IMR-90 (cell line): ENCODE measurements at regions of chr4 and their contacts with region 1.

Region 1: DNA sequence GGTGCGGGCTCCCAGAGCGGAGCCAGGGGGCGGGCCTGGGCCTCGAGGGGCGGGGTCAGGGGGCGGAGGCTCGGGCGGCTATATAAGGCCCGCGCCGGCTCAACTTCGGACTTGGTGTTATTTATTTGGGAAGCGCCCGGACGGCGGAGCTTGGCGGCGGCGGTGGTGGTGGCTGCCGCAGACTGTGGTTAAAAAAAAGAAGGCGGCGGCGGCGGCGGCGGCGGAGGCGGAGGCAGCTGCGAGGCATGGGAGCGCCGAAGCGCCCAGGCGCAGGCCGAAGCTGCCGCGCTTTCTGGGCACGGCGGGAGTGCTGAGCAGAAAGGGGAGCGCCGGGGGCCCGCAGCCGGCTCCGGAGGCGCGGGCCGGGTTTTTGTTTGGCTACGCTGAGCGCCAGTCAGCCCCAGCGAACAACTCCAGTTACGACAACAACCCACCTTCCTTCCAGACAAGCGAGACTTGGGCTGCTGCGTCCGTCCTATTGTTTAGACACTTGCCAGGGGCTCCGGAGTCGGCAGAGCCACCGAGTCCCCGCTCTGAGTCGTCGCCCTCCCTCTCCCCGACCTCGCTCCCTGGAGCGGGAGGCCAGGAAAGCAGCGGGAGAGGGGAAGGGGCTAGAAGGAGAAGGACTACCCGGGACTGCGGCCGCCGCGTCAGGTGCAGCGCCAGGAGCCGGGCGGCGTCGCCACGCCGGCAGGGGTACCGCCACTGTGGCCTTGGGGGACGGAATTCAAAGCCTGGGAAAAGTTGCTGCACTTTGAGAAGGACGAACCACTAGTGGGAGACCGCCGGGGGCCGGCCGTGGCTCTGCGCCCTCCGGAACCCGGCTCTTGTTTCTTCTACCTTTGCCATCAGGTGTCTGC is at the start of gene SLIT2:
- DNase-seq: peak; percentile 68
- ATAC-seq: peak; percentile 75
- H3K4me3 ChIP-seq: peak within 1 kb of the TSS; percentile 55
- H3K27ac ChIP-seq: no peak within 1 kb of the TSS; the same call in 1 of the 2 replicates
- H3K4me1 ChIP-seq: peaks cover 11% of the 10 kb centered on the region
- H3K27me3 ChIP-seq: peaks cover 22% of the 10 kb centered on the region
- CTCF ChIP-seq: no peak
- POLR2A ChIP-seq: peak; percentile 93
- RAD21 ChIP-seq: no peak
- total RNA-seq, gene SLIT2: 13.6 and 18.1 TPM in 2 replicates

Region 2: GRCh38 chr4:18689308-18690115 is 1562.5 kb before region 1 on chr4:
- CTCF ChIA-PET with region 1: no interaction called
- POLR2A ChIA-PET with region 1: no interaction called
- dilution Hi-C with region 1: no loop called
- in situ Hi-C with region 1: loop called (anchors 25 kb)
- intact Hi-C with region 1: loop called (anchors 1 kb)
- DNase-seq: peak; percentile 66
- ATAC-seq: peak; percentile 74; the same call in 1 of the 2 replicates
- H3K4me3 ChIP-seq: no peak overlapping the region
- H3K27ac ChIP-seq: no peak overlapping the region
- H3K4me1 ChIP-seq: no peaks in the 10 kb centered on the region
- H3K27me3 ChIP-seq: no peaks in the 10 kb centered on the region
- CTCF ChIP-seq: peak; percentile 82
- POLR2A ChIP-seq: no peak
- RAD21 ChIP-seq: peak; percentile 89

Region 3: GRCh38 chr4:19239565-19239964 is 1012.5 kb before region 1 on chr4:
- CTCF ChIA-PET with region 1: no interaction called
- POLR2A ChIA-PET with region 1: no interaction called
- dilution Hi-C with region 1: no loop called
- in situ Hi-C with region 1: loop called (anchors 10 kb)
- intact Hi-C with region 1: no loop called
- DNase-seq: peak; percentile 66
- ATAC-seq: peak; percentile 37
- H3K4me3 ChIP-seq: no peak overlapping the region
- H3K27ac ChIP-seq: no peak overlapping the region
- H3K4me1 ChIP-seq: no peaks in the 10 kb centered on the region
- H3K27me3 ChIP-seq: no peaks in the 10 kb centered on the region
- CTCF ChIP-seq: no peak
- POLR2A ChIP-seq: no peak
- RAD21 ChIP-seq: no peak

Region 4: DNA sequence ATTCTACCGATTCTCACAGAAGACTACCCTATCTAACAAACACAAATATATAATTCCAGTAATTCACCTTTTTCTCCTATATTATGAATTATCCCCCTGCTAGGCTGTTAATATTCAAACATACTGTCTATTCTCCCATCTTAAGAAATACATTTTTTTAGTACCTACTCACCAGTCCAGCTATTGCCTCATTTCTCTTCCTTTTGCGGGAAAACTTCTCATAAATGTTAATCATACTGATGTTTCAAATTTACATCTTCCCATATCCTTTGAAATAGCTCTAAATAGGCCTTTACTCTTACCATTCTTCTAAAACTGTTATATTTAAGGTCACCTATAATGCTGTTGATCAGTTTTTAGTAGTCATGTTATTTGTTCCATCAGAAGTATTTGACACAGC is 759.4 kb before region 1 on chr4:
- CTCF ChIA-PET with region 1: no interaction called
- POLR2A ChIA-PET with region 1: no interaction called
- dilution Hi-C with region 1: no loop called
- in situ Hi-C with region 1: no loop called
- intact Hi-C with region 1: loop called (anchors 10 kb)
- DNase-seq: peak; percentile 56
- ATAC-seq: no peak
- H3K4me3 ChIP-seq: no peak overlapping the region
- H3K27ac ChIP-seq: no peak overlapping the region
- H3K4me1 ChIP-seq: peaks cover 8% of the 10 kb centered on the region
- H3K27me3 ChIP-seq: no peaks in the 10 kb centered on the region
- CTCF ChIP-seq: no peak
- POLR2A ChIP-seq: no peak
- RAD21 ChIP-seq: no peak

Region 5: DNA sequence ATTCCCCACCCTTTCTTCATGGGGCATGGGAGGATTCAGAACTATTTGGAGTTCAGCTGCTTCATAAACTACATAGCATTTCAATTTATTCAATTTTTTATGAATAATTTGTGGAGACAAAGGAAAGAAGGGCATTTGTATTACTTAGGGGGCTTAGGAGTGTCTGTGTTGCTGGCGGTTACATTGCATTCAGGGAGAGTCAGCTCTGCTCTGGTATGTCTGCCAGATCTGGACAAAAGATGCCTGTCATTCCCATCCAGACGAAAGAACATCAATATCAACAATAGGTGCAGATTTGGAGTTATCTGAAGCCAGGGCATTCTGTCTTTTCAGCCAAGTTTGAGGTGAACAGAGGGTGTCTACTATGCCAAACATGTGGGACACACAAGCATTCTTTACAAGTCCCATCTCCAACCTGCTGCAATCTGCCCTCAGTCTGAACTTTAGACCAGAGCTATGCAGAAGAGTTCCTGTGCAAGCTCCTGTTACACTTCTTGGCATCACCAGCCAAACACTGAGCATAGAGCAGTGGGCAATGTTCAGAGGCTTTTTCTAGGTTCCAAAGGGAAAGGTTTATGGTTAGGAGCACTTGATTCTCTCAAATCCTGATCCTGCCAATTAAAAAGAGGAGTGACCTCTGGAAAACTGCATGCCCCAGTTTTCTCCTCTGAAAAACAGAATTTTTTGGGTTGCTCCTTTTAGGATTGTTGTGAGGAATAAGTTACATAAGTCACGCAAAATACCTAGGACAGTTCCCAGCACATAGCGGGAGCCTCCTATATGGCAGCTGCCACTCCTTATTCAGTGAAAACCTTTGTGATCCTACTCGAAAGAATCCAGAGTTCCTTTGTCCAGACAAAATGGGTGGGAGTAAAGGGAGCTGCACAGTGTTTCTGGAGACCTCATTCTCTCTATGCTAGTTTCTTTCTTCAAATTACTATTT is 719.8 kb before region 1 on chr4:
- CTCF ChIA-PET with region 1: no interaction called
- POLR2A ChIA-PET with region 1: no interaction called
- dilution Hi-C with region 1: no loop called
- in situ Hi-C with region 1: no loop called
- intact Hi-C with region 1: no loop called
- DNase-seq: peak; percentile 38
- ATAC-seq: peak; percentile 71
- H3K4me3 ChIP-seq: no peak overlapping the region
- H3K27ac ChIP-seq: no peak overlapping the region
- H3K4me1 ChIP-seq: no peaks in the 10 kb centered on the region
- H3K27me3 ChIP-seq: no peaks in the 10 kb centered on the region; the same call in 1 of the 2 replicates
- CTCF ChIP-seq: no peak
- POLR2A ChIP-seq: no peak
- RAD21 ChIP-seq: no peak

Region 6: GRCh38 chr4:20075248-20075871 is 176.7 kb before region 1 on chr4:
- CTCF ChIA-PET with region 1: no interaction called
- POLR2A ChIA-PET with region 1: no interaction called
- dilution Hi-C with region 1: no loop called
- in situ Hi-C with region 1: no loop called
- intact Hi-C with region 1: loop called (anchors 10 kb)
- DNase-seq: peak; percentile 1
- ATAC-seq: no peak
- H3K4me3 ChIP-seq: no peak overlapping the region
- H3K27ac ChIP-seq: no peak overlapping the region
- H3K4me1 ChIP-seq: peaks cover 2% of the 10 kb centered on the region; the same call in 1 of the 2 replicates
- H3K27me3 ChIP-seq: no peaks in the 10 kb centered on the region
- CTCF ChIP-seq: 0 out of 2 replicates have a peak, but pooled peaks have one; percentile 17
- POLR2A ChIP-seq: no peak
- RAD21 ChIP-seq: 0 out of 2 replicates have a peak, but pooled peaks have one; percentile 24

Region 7: GRCh38 chr4:20684852-20685763 is 433.1 kb after region 1 on chr4:
- CTCF ChIA-PET with region 1: no interaction called
- POLR2A ChIA-PET with region 1: no interaction called
- dilution Hi-C with region 1: no loop called
- in situ Hi-C with region 1: no loop called
- intact Hi-C with region 1: loop called (anchors 1 kb)
- DNase-seq: peak; percentile 27
- ATAC-seq: peak; percentile 27; the same call in 1 of the 2 replicates
- H3K4me3 ChIP-seq: no peak overlapping the region
- H3K27ac ChIP-seq: no peak overlapping the region
- H3K4me1 ChIP-seq: no peaks in the 10 kb centered on the region
- H3K27me3 ChIP-seq: peaks cover 5% of the 10 kb centered on the region
- CTCF ChIP-seq: peak; percentile 73
- POLR2A ChIP-seq: no peak
- RAD21 ChIP-seq: peak; percentile 73

Region 8: GRCh38 chr4:20832826-20833225 is 580.8 kb after region 1 on chr4:
- CTCF ChIA-PET with region 1: no interaction called
- POLR2A ChIA-PET with region 1: no interaction called
- dilution Hi-C with region 1: no loop called
- in situ Hi-C with region 1: no loop called
- intact Hi-C with region 1: no loop called
- DNase-seq: peak; percentile 0
- ATAC-seq: no peak
- H3K4me3 ChIP-seq: no peak overlapping the region
- H3K27ac ChIP-seq: no peak overlapping the region
- H3K4me1 ChIP-seq: no peaks in the 10 kb centered on the region
- H3K27me3 ChIP-seq: no peaks in the 10 kb centered on the region
- CTCF ChIP-seq: no peak
- POLR2A ChIP-seq: no peak
- RAD21 ChIP-seq: no peak